Panc1 (cell line): ENCODE measurements at regions of chr3 and their contacts with region 1.

Region 1: DNA sequence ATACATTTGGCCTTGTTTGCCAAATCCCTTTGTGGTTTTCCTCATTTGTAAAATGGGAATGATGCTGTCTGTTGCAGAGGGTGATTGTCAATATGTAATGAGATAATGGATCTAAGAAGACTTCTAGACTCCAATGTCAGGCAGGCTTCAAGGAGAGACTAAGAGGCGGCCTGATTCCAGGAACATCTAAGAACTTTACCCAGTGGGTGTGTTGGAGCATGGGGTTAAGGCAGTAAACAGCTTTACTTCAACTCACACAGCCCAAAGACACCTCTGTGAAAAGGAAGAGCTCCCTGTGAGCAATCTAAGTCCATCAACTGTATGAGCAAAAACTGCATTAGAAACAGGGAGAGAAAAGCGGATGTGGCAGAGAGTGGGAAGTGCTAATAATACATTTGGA is 560.6 kb downstream of the PDCD6IP start:
- DNase-seq: no peak
- ATAC-seq: no peak
- H3K4me3 ChIP-seq: no peak overlapping the region
- H3K27ac ChIP-seq: no peak overlapping the region
- H3K4me1 ChIP-seq: no peaks in the 10 kb centered on the region
- H3K27me3 ChIP-seq: no peaks in the 10 kb centered on the region
- CTCF ChIP-seq: no peak

Region 2: DNA sequence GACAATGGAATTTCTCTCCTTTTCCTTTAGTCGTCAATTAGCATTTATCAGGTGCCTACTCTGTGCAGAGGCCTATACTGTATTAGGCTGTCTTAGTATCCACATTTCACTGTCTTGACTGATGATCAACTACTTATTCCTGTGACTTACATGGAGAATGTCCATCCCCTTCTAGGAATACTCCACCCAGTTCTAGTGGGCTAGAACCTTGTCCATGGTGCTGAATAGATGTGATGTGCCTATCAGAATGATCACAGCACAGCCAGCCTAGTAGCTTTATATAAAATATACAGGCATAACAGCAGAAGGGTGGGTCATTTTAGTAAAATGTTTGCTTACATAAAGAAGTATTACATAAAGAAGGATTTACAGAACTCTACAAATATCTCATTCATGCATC is 60.7 kb after region 1 on chr3:
- CTCF ChIA-PET with region 1: no interaction called
- POLR2A ChIA-PET with region 1: no interaction called
- in situ Hi-C with region 1: no loop called
- intact Hi-C with region 1: loop called (anchors 2 kb)
- DNase-seq: no peak
- ATAC-seq: no peak
- H3K4me3 ChIP-seq: no peak overlapping the region
- H3K27ac ChIP-seq: no peak overlapping the region
- H3K4me1 ChIP-seq: no peaks in the 10 kb centered on the region
- H3K27me3 ChIP-seq: no peaks in the 10 kb centered on the region
- CTCF ChIP-seq: no peak